Mammary epithelial cell (primary cell): ENCODE measurements at regions of chr14 and their contacts with region 1.

Region 1: GRCh38 chr14:56514663-56515371 is 64.8 kb upstream of the TMEM260 start:
- DNase-seq: no peak
- H3K4me3 ChIP-seq: no peak overlapping the region
- H3K27ac ChIP-seq: no peak overlapping the region
- H3K4me1 ChIP-seq: no peaks in the 10 kb centered on the region
- H3K27me3 ChIP-seq: peaks cover 4% of the 10 kb centered on the region
- CTCF ChIP-seq: no peak

Region 2: DNA sequence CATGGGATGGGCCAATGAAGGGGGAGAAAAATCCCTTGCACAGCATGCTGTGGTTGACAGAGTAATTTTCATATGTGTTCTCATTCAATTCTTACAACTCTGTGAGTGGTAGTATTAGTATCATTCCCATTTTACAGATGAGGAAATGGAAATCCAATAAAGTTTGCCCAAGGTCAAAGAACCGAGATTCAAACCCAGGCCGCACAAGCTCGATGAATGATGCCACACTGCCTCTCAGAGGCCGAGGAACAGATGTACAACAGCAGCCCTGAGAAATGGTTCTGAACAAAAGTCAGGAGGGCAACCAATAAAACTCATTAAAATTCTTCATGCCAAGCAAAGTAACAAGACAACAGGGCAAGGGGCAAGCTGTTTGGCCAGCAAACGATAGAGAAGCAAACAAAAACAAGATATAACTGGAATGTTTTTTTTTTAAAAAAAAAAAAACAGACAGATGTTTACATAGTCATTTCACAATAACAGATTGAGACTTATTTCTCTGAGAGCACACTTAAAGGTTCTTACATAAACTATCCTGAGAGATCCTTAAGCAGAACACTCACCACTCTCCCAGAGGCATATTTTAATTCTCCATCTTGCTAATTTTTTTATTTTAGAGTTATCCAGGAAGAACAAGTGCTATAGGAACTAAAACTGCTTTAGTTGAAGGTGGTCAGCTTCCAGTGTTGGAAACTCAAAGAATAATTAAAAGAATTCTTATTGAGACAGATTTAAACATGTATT is 668.1 kb after region 1 on chr14:
- CTCF ChIA-PET with region 1: no interaction called
- dilution Hi-C with region 1: loop called (anchors 25 kb)
- in situ Hi-C with region 1: no loop called
- intact Hi-C with region 1: no loop called
- DNase-seq: peak; percentile 2
- H3K4me3 ChIP-seq: no peak overlapping the region
- H3K27ac ChIP-seq: no peak overlapping the region
- H3K4me1 ChIP-seq: no peaks in the 10 kb centered on the region
- H3K27me3 ChIP-seq: peaks cover 1% of the 10 kb centered on the region
- CTCF ChIP-seq: peak; percentile 41 to 51